ENCODE measurements at regions of chr5 and their contacts with region 1.

Region 1: GRCh38 chr5:96125231-96125891 is 163.7 kb upstream of the ELL2 start:
- DNase-seq: no peak
- ATAC-seq: peak; percentile 55 to 60
- H3K4me3 ChIP-seq: peak overlapping the region; percentile 12
- H3K27ac ChIP-seq: no peak overlapping the region
- H3K4me1 ChIP-seq: no peaks in the 10 kb centered on the region
- H3K27me3 ChIP-seq: no peaks in the 10 kb centered on the region

Region 2: GRCh38 chr5:95939465-95939864 is 185.9 kb before region 1 on chr5:
- intact Hi-C with region 1: no loop called
- DNase-seq: no peak
- ATAC-seq: no peak
- H3K4me3 ChIP-seq: no peak overlapping the region
- H3K27ac ChIP-seq: no peak overlapping the region
- H3K4me1 ChIP-seq: peaks cover 3% of the 10 kb centered on the region
- H3K27me3 ChIP-seq: no peaks in the 10 kb centered on the region

Region 3: GRCh38 chr5:96324708-96325107 is 199.3 kb after region 1 on chr5:
- intact Hi-C with region 1: loop called in 1 of 4 experiments (anchors 10 kb)
- DNase-seq: no peak
- ATAC-seq: no peak
- H3K4me3 ChIP-seq: no peak overlapping the region
- H3K27ac ChIP-seq: no peak overlapping the region
- H3K4me1 ChIP-seq: no peaks in the 10 kb centered on the region
- H3K27me3 ChIP-seq: no peaks in the 10 kb centered on the region